ENCODE measurements at regions of chr4 and their contacts with region 1.

Region 1: GRCh38 chr4:2767705-2768074 is 11.6 kb upstream of the TNIP2 start:
- DNase-seq: peak; percentile 73 to 79
- ATAC-seq: peak in 7 of 8 donors; percentile 36 to 84 (median 74)
- H3K4me3 ChIP-seq: no peak overlapping the region
- H3K27ac ChIP-seq: peak overlapping the region in 2 of 10 donors; percentile 24 to 45
- H3K4me1 ChIP-seq: peaks cover 0 to 40% (median 17%) of the 10 kb centered on the region in 9 donors
- H3K27me3 ChIP-seq: no peaks in the 10 kb centered on the region
- CTCF ChIP-seq: no peak

Region 2: GRCh38 chr4:2792711-2793585 is 25.3 kb after region 1 on chr4 and contains the start of gene SH3BP2:
- intact Hi-C with region 1: loop called in 1 of 10 experiments (anchors 2 kb)
- DNase-seq: peak; percentile 87 to 93
- ATAC-seq: peak; percentile 47 to 85 (median 69)
- H3K4me3 ChIP-seq: peak within 1 kb of the TSS; percentile 56 to 86 (median 79)
- H3K27ac ChIP-seq: peak within 1 kb of the TSS; percentile 58 to 96 (median 86)
- H3K4me1 ChIP-seq: peaks cover 34 to 79% (median 69%) of the 10 kb centered on the region in 9 donors
- H3K27me3 ChIP-seq: no peaks in the 10 kb centered on the region
- CTCF ChIP-seq: no peak
- total RNA-seq, gene SH3BP2: 10.4 to 36.9 (median 16.4) TPM

Region 3: GRCh38 chr4:2811830-2812611 is 44.3 kb after region 1 on chr4:
- intact Hi-C with region 1: loop called in 3 of 10 experiments (anchors 2 to 10 kb)
- DNase-seq: peak; percentile 70 to 78
- ATAC-seq: peak; percentile 57 to 86 (median 75)
- H3K4me3 ChIP-seq: peak overlapping the region; percentile 12 to 71 (median 48)
- H3K27ac ChIP-seq: peak overlapping the region; percentile 55 to 95 (median 84)
- H3K4me1 ChIP-seq: peaks cover 34 to 93% (median 56%) of the 10 kb centered on the region in 9 donors
- H3K27me3 ChIP-seq: no peaks in the 10 kb centered on the region
- CTCF ChIP-seq: no peak

Region 4: DNA sequence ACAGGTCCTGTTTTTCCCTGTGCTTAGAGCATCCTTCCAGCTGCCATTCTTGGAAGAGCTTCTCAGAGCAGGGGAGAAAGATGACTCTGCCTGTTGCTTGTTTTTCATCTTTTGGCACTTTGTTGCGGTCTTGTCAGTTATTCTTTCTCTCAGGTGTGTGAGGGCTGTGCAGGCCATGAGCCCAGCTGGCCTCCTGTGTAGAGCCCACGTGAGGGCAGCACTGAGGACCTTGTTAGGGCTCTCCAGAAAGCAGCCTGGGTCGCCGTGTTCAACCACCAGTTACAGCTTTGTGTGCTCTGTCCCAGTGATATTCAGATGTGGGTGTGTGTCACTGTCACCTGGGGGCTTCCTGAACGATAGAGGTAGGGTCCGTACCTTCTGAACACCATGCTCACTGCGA is 142.7 kb after region 1 on chr4:
- intact Hi-C with region 1: loop called in 2 of 10 experiments (anchors 5 to 10 kb)
- DNase-seq: no peak
- ATAC-seq: peak in 2 of 8 donors; percentile 23 to 44
- H3K4me3 ChIP-seq: no peak overlapping the region
- H3K27ac ChIP-seq: peak overlapping the region in 1 of 10 donors; percentile 12
- H3K4me1 ChIP-seq: peaks cover 0 to 30% (median 5%) of the 10 kb centered on the region in 9 donors
- H3K27me3 ChIP-seq: no peaks in the 10 kb centered on the region
- CTCF ChIP-seq: peak in 5 of 9 donors; percentile 17 to 35 (median 31)

Region 5: DNA sequence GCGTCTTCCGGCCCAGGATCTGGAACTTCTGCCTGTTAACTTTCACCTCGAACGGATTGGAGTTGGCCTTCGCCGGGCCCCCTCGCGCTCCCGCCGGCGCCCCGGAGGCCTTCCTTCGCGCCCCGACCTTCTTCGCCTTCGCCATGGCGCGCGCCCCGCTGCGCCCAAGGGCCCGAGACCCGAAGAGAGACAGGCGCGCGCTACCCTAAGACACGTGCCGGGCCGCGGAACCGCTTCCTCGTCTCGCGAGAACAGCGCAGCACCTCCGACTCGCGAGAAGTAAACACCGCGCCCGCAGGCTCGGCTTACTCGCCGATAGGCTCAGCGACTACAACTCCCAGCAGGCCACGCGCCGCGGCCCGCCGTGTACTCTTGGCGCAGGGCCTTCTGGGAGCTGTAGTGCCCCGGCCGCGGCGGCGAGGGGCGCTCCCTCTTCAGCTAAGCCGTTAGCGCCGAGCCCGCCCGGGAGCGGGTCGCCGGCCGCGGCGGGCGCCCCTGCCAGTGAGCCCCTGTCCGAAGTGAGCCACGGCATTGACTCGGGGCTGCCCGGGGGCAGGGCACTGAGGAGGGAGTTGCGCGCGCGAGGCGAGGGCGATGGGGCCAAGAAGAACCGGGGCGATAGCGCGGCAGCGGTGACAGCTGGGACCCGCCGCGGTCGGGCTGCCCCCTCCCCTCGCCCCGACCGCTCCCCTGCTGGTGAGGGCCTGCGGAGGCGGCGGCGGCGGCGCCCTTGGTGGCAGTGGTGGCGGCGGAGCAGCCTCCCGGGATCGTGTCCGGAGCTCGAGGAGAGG is 195.7 kb after region 1 on chr4 and contains the starts of genes GRK4 and NOP14:
- intact Hi-C with region 1: loop called in 1 of 10 experiments (anchors 2 kb)
- DNase-seq: peak; percentile 97 to 98
- ATAC-seq: peak; percentile 97 to 99 (median 98)
- H3K4me3 ChIP-seq: peak within 1 kb of the TSS; percentile 77 to 99 (median 97)
- H3K27ac ChIP-seq: peak within 1 kb of the TSS; percentile 86 to 95 (median 92)
- H3K4me1 ChIP-seq: peaks cover 9 to 36% (median 25%) of the 10 kb centered on the region in 9 donors
- H3K27me3 ChIP-seq: no peaks in the 10 kb centered on the region
- CTCF ChIP-seq: peak in 8 of 9 donors; percentile 21 to 64 (median 41)
- total RNA-seq, gene GRK4: 6.2 to 13.4 (median 10.3) TPM
- total RNA-seq, gene NOP14: 12.4 to 24.0 (median 17.3) TPM

Measured in heart right ventricle (tissue), 16 donors.